Mammary epithelial cell (primary cell): ENCODE measurements at regions of chr2 and their contacts with region 1.

Region 1: GRCh38 chr2:157784169-157784822 is 91.8 kb downstream of the ACVR1 start:
- DNase-seq: peak; percentile 89
- H3K4me3 ChIP-seq: peak overlapping the region; percentile 5 to 24 (median 13)
- H3K27ac ChIP-seq: peak overlapping the region; percentile 67
- H3K4me1 ChIP-seq: peaks cover 36% of the 10 kb centered on the region
- H3K27me3 ChIP-seq: no peaks in the 10 kb centered on the region
- CTCF ChIP-seq: no peak

Region 2: GRCh38 chr2:157327621-157328500 is 456.4 kb before region 1 on chr2:
- CTCF ChIA-PET with region 1: no interaction called
- dilution Hi-C with region 1: no loop called
- in situ Hi-C with region 1: no loop called
- intact Hi-C with region 1: loop called (anchors 10 kb)
- DNase-seq: peak; percentile 56
- H3K4me3 ChIP-seq: no peak overlapping the region
- H3K27ac ChIP-seq: no peak overlapping the region
- H3K4me1 ChIP-seq: no peaks in the 10 kb centered on the region
- H3K27me3 ChIP-seq: no peaks in the 10 kb centered on the region
- CTCF ChIP-seq: peak; percentile 90 to 97

Region 3: GRCh38 chr2:157830696-157831570 is 46.6 kb after region 1 on chr2:
- CTCF ChIA-PET with region 1: no interaction called
- dilution Hi-C with region 1: no loop called
- in situ Hi-C with region 1: no loop called
- intact Hi-C with region 1: loop called (anchors 2 kb)
- DNase-seq: peak; percentile 93
- H3K4me3 ChIP-seq: no peak overlapping the region
- H3K27ac ChIP-seq: peak overlapping the region; percentile 92
- H3K4me1 ChIP-seq: peaks cover 22% of the 10 kb centered on the region
- H3K27me3 ChIP-seq: no peaks in the 10 kb centered on the region
- CTCF ChIP-seq: no peak

Region 4: GRCh38 chr2:157857881-157858280 is 73.6 kb after region 1 on chr2:
- CTCF ChIA-PET with region 1: no interaction called
- dilution Hi-C with region 1: no loop called
- in situ Hi-C with region 1: loop called in 1 of 2 experiments (anchors 10 kb)
- intact Hi-C with region 1: no loop called
- DNase-seq: no peak
- H3K4me3 ChIP-seq: no peak overlapping the region
- H3K27ac ChIP-seq: no peak overlapping the region
- H3K4me1 ChIP-seq: peaks cover 13% of the 10 kb centered on the region
- H3K27me3 ChIP-seq: no peaks in the 10 kb centered on the region
- CTCF ChIP-seq: no peak

Region 5: DNA sequence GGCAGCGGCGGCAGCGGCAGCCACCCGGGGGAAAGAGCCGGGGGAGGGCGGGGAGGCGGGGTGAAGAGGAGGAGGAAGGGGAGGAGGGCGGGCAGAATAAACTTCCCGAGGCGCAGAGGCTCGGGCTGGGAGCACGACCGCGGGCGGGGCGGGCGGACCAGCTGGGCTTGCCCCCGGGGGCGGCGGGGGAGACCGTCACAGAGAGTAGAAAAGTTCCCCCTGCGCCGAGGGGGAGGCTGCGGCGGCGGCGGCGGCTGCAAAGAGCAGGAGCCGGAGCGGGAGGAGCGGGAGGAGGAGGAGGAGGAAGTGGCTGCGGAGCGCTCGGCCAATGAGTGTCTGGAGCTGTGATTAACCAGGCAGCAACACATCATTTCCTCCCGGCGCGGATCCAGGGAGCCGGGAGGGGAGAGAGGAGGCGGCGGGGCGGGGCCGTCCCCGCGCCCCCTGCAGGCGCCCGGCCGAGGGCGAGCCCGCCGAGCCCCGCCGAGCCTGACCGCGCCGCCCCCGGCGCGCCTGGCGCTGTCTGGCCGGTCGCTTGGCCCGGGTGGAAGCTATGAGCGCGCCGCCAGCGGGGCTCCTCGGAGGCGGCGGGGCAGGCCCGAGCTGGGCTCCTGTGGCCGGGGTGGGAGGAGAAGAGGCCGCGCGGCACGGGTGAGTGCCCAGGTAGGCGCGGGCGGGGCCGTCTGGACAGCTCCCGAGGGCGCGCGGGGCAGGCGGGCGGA is 91.9 kb after region 1 on chr2 and contains the start of gene ACVR1:
- CTCF ChIA-PET with region 1: no interaction called
- dilution Hi-C with region 1: no loop called
- in situ Hi-C with region 1: loop called in 1 of 2 experiments (anchors 10 kb)
- intact Hi-C with region 1: loop called (anchors 1 kb)
- DNase-seq: peak; percentile 96
- H3K4me3 ChIP-seq: peak within 1 kb of the TSS; percentile 76 to 92 (median 82)
- H3K27ac ChIP-seq: peak within 1 kb of the TSS; percentile 70
- H3K4me1 ChIP-seq: peaks cover 38% of the 10 kb centered on the region
- H3K27me3 ChIP-seq: no peaks in the 10 kb centered on the region
- CTCF ChIP-seq: peak; percentile 10 to 23
- total RNA-seq, gene ACVR1: 35.1 to 41.2 TPM

Region 6: GRCh38 chr2:159249984-159250715 is 1465.9 kb after region 1 on chr2:
- CTCF ChIA-PET with region 1: no interaction called
- dilution Hi-C with region 1: no loop called
- in situ Hi-C with region 1: no loop called
- intact Hi-C with region 1: no loop called
- DNase-seq: peak; percentile 94
- H3K4me3 ChIP-seq: no peak overlapping the region
- H3K27ac ChIP-seq: peak overlapping the region; percentile 63
- H3K4me1 ChIP-seq: peaks cover 15% of the 10 kb centered on the region
- H3K27me3 ChIP-seq: no peaks in the 10 kb centered on the region
- CTCF ChIP-seq: no peak